Gastrocnemius medialis (tissue), 4 donors: ENCODE measurements at regions of chr20 and their contacts with region 1.

Region 1: GRCh38 chr20:44966030-44966961 is at the start of gene STK4:
- DNase-seq: peak; percentile 71 to 88
- ATAC-seq: peak; percentile 93 to 96
- H3K4me3 ChIP-seq: peak within 1 kb of the TSS; percentile 73 to 100 (median 92)
- H3K27ac ChIP-seq: peak within 1 kb of the TSS; percentile 88 to 91 (median 90)
- H3K4me1 ChIP-seq: peaks cover 11 to 15% of the 10 kb centered on the region in 2 donors
- H3K27me3 ChIP-seq: no peaks in the 10 kb centered on the region
- CTCF ChIP-seq: peak in 4 of 5 experiments; percentile 21 to 67 (median 54)
- POLR2A ChIP-seq: peak; percentile 71 to 78
- total RNA-seq, gene STK4: 4.5 to 6.4 (median 5.5) TPM

Region 2: GRCh38 chr20:43590392-43591323 is 1375.6 kb before region 1 on chr20 and contains the start of gene IFT52:
- in situ Hi-C with region 1: no loop called
- intact Hi-C with region 1: loop called (anchors 10 kb)
- DNase-seq: peak; percentile 84 to 88
- ATAC-seq: peak; percentile 99
- H3K4me3 ChIP-seq: peak within 1 kb of the TSS; percentile 92 to 97 (median 96)
- H3K27ac ChIP-seq: peak within 1 kb of the TSS; percentile 78 to 93 (median 86)
- H3K4me1 ChIP-seq: peaks cover 12 to 16% of the 10 kb centered on the region in 2 donors
- H3K27me3 ChIP-seq: no peaks in the 10 kb centered on the region
- CTCF ChIP-seq: no peak
- POLR2A ChIP-seq: peak in 1 of 2 donors; percentile 6
- total RNA-seq, gene IFT52: 1.7 to 3.4 (median 2.9) TPM

Region 3: GRCh38 chr20:44442298-44443070 is 523.8 kb before region 1 on chr20:
- in situ Hi-C with region 1: no loop called
- intact Hi-C with region 1: no loop called
- DNase-seq: no peak
- ATAC-seq: peak in 1 of 2 donors; percentile 41
- H3K4me3 ChIP-seq: no peak overlapping the region
- H3K27ac ChIP-seq: no peak overlapping the region
- H3K4me1 ChIP-seq: no peaks in the 10 kb centered on the region
- H3K27me3 ChIP-seq: no peaks in the 10 kb centered on the region
- CTCF ChIP-seq: no peak
- POLR2A ChIP-seq: no peak

Region 4: DNA sequence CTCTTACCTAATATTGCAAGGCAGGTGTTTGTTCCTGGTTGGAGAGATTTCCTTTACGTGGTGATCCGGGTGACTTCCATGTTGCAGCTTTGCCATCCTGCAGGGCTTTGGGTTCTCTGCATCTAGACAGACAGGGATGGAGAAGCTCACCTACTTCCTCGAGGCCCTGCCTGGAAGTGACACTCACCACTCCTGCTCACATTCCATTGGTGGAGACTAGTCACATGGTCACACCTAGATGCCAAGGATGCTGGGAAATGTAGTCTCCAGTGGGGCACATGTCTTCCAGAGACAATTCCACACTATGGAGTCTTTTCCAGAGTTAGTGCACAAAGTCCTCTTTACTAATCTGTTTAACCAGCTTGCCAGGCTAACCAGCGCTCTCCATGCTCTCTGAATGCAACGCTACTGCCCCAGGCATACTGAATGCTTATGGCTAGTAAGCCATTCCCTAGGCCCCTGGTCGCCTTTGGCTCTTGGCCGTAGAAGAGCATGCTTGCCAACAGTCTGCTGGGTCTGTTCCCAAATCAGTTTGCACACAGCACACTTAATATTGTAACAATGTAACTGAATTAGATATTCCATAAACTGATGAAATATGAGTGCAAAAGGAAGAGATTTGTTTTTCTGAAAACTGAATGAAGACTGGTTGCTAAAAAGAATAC is 227.4 kb before region 1 on chr20:
- in situ Hi-C with region 1: no loop called
- intact Hi-C with region 1: loop called (anchors 5 kb)
- DNase-seq: peak in 1 of 2 donors; percentile 69
- ATAC-seq: peak; percentile 44 to 60
- H3K4me3 ChIP-seq: no peak overlapping the region
- H3K27ac ChIP-seq: peak overlapping the region; percentile 70 to 79 (median 76)
- H3K4me1 ChIP-seq: peaks cover 15% of the 10 kb centered on the region in 2 donors
- H3K27me3 ChIP-seq: no peaks in the 10 kb centered on the region
- CTCF ChIP-seq: no peak
- POLR2A ChIP-seq: no peak

Region 5: GRCh38 chr20:44832724-44833123 is 133.6 kb before region 1 on chr20:
- in situ Hi-C with region 1: no loop called
- intact Hi-C with region 1: no loop called
- DNase-seq: no peak
- ATAC-seq: no peak
- H3K4me3 ChIP-seq: no peak overlapping the region
- H3K27ac ChIP-seq: no peak overlapping the region
- H3K4me1 ChIP-seq: no peaks in the 10 kb centered on the region
- H3K27me3 ChIP-seq: peaks cover 5 to 24% (median 13%) of the 10 kb centered on the region in 3 donors
- CTCF ChIP-seq: no peak
- POLR2A ChIP-seq: no peak

Region 6: GRCh38 chr20:45011108-45011526 is 44.8 kb after region 1 on chr20:
- in situ Hi-C with region 1: no loop called
- intact Hi-C with region 1: no loop called
- DNase-seq: peak; percentile 22
- ATAC-seq: peak; percentile 70 to 76
- H3K4me3 ChIP-seq: no peak overlapping the region
- H3K27ac ChIP-seq: no peak overlapping the region
- H3K4me1 ChIP-seq: peaks cover 3% of the 10 kb centered on the region in 2 donors
- H3K27me3 ChIP-seq: no peaks in the 10 kb centered on the region
- CTCF ChIP-seq: peak; percentile 14 to 71 (median 51)
- POLR2A ChIP-seq: no peak

Region 7: GRCh38 chr20:45052698-45053429 is 86.6 kb after region 1 on chr20:
- in situ Hi-C with region 1: loop called in 1 of 4 experiments (anchors 25 kb)
- intact Hi-C with region 1: no loop called
- DNase-seq: no peak
- ATAC-seq: no peak
- H3K4me3 ChIP-seq: no peak overlapping the region
- H3K27ac ChIP-seq: no peak overlapping the region
- H3K4me1 ChIP-seq: peaks cover 0 to 4% of the 10 kb centered on the region in 2 donors
- H3K27me3 ChIP-seq: no peaks in the 10 kb centered on the region
- CTCF ChIP-seq: no peak
- POLR2A ChIP-seq: no peak

Region 8: GRCh38 chr20:46400828-46401477 is 1434.7 kb after region 1 on chr20:
- in situ Hi-C with region 1: no loop called
- intact Hi-C with region 1: loop called (anchors 5 kb)
- DNase-seq: no peak
- ATAC-seq: no peak
- H3K4me3 ChIP-seq: peak overlapping the region; percentile 11 to 21 (median 16)
- H3K27ac ChIP-seq: peak overlapping the region; percentile 80 to 93 (median 85)
- H3K4me1 ChIP-seq: peaks cover 70 to 73% of the 10 kb centered on the region in 2 donors
- H3K27me3 ChIP-seq: no peaks in the 10 kb centered on the region
- CTCF ChIP-seq: no peak
- POLR2A ChIP-seq: no peak